GM12878 (cell line): ENCODE measurements at regions of chr2 and their contacts with region 1.

Region 1: DNA sequence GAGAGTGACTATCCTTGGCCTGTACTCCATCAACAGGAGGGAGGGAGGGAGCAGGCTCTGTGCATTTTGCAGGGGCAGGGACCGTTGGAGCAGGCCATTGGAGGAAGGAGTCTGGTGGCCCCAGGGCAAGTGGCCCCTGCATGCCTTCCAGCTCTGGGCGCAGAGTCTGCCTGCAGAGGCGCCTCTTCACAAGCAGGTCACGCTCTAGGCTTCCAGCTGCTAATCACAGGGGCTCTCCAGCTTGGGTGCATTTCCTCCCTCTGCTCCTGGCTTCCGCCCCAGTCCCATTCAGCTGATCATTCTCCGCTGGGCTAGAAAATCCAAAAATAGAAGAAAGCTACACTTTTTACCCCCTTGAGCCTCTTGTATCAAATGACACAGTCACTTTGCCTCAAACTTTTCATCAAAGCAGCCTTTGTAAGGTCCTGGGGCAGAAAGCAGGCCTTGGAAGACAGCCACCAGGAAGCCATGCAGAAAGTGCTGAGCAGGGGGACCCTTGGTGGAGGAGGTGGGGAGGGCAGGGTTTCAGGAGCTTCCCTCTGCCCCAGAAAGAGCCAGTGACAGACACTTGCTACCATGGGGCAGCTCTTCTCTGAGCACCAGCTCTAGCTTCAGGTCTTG is 11.3 kb downstream of the TMEM247 start:
- DNase-seq: no peak
- ATAC-seq: peak; percentile 34
- H3K4me3 ChIP-seq: no peak overlapping the region
- H3K27ac ChIP-seq: 0 out of 2 replicates have a peak overlapping the region, but pooled peaks have one; percentile 12
- H3K4me1 ChIP-seq: peaks cover 30% of the 10 kb centered on the region
- H3K27me3 ChIP-seq: no peaks in the 10 kb centered on the region
- CTCF ChIP-seq: peak; percentile 1 to 46 (median 28); a peak in 4 of 6 replicates
- EP300 ChIP-seq: no peak
- POLR2A ChIP-seq: no peak
- RAD21 ChIP-seq: peak; percentile 65

Region 2: GRCh38 chr2:46470114-46470628 is 20.5 kb before region 1 on chr2:
- CTCF ChIA-PET with region 1: interaction called, 11 read pairs
- POLR2A ChIA-PET with region 1: interaction called, 4 read pairs
- RAD21 ChIA-PET with region 1: interaction called, 13 read pairs
- SMC1A ChIA-PET with region 1: interaction called, 15 read pairs
- in situ Hi-C with region 1: no loop called
- intact Hi-C with region 1: no loop called
- DNase-seq: no peak
- ATAC-seq: peak; percentile 16; the same call in 2 of the 3 replicates
- H3K4me3 ChIP-seq: no peak overlapping the region
- H3K27ac ChIP-seq: no peak overlapping the region
- H3K4me1 ChIP-seq: no peaks in the 10 kb centered on the region
- H3K27me3 ChIP-seq: no peaks in the 10 kb centered on the region
- CTCF ChIP-seq: no peak
- EP300 ChIP-seq: no peak
- POLR2A ChIP-seq: no peak
- RAD21 ChIP-seq: no peak

Region 3: DNA sequence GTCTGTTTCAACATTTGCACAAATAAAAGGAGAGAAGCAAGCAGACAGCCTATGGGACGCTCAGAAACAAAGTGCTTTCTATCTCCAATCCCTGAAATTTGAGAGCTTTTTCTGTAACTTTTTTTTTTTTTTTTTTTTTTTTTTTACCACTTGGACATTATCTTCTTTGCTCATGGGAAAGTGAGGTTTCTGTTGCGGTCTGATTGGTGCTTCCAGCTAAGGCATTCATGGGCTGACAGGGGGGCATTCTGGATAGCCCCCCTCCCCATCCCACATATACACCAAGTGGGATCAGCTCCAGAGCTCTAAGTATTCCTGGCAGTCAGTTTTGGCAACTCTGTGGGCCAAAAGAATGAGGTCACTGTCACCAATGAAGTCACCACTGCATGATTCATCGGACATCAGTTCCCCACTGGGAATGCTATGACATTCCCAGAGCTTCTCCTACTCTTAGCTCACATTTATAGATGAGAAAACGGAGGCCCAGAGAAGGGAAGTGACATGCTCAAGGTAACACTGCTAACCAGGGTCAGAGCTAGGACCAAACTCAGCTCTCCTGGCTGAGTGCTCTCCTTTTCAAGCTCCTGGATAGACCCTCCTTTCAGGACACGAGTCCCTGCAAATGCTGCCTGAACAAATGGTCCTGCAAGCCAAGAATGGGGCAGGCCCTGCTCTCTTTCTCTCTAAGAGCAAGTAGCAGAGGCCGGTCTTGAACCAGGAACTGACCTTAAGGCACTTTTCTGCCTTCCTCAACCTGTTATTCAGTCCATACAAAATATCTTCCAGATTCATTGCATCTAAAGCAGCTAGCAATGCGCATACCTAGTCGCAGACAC is 50.1 kb after region 1 on chr2:
- CTCF ChIA-PET with region 1: interaction called, 17 read pairs
- POLR2A ChIA-PET with region 1: interaction called, 10 read pairs
- RAD21 ChIA-PET with region 1: interaction called, 31 read pairs
- SMC1A ChIA-PET with region 1: interaction called, 89 read pairs
- in situ Hi-C with region 1: no loop called
- intact Hi-C with region 1: no loop called
- DNase-seq: no peak
- ATAC-seq: no peak
- H3K4me3 ChIP-seq: peak overlapping the region; percentile 58
- H3K27ac ChIP-seq: 0 out of 2 replicates have a peak overlapping the region, but pooled peaks have one; percentile 77
- H3K4me1 ChIP-seq: peaks cover 43% of the 10 kb centered on the region
- H3K27me3 ChIP-seq: no peaks in the 10 kb centered on the region
- CTCF ChIP-seq: no peak
- EP300 ChIP-seq: no peak
- POLR2A ChIP-seq: no peak
- RAD21 ChIP-seq: no peak

Region 4: DNA sequence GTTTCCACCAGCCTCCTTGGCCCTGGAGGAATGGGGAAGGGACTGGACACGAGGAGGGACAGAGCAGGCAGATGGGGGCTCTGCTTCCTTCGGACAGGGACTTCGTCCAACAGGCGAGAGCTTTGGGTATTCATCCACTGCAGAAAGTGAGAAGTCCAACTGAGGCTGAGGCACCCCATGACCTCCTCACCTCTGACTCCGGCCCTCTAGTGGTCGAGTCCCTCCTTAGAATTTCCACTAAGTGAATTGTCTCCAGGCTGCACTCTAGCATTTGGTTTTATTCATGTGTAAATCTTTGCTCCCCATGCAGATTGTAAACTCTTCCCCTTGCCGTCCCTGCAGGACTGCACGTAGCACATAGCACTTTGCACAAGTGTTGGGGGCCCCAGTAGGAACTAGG is 64.4 kb after region 1 on chr2:
- CTCF ChIA-PET with region 1: interaction called, 12 read pairs
- POLR2A ChIA-PET with region 1: no interaction called
- RAD21 ChIA-PET with region 1: interaction called, 31 read pairs
- SMC1A ChIA-PET with region 1: interaction called, 89 read pairs
- in situ Hi-C with region 1: no loop called
- intact Hi-C with region 1: no loop called
- DNase-seq: no peak
- ATAC-seq: peak; percentile 71
- H3K4me3 ChIP-seq: no peak overlapping the region
- H3K27ac ChIP-seq: no peak overlapping the region
- H3K4me1 ChIP-seq: peaks cover 23% of the 10 kb centered on the region
- H3K27me3 ChIP-seq: no peaks in the 10 kb centered on the region
- CTCF ChIP-seq: peak; percentile 31 to 60 (median 48)
- EP300 ChIP-seq: no peak
- POLR2A ChIP-seq: no peak
- RAD21 ChIP-seq: peak; percentile 12; the same call in 1 of the 2 replicates